HCT116 (cell line): ENCODE measurements at regions of chr1 and their contacts with region 1.

Region 1: DNA sequence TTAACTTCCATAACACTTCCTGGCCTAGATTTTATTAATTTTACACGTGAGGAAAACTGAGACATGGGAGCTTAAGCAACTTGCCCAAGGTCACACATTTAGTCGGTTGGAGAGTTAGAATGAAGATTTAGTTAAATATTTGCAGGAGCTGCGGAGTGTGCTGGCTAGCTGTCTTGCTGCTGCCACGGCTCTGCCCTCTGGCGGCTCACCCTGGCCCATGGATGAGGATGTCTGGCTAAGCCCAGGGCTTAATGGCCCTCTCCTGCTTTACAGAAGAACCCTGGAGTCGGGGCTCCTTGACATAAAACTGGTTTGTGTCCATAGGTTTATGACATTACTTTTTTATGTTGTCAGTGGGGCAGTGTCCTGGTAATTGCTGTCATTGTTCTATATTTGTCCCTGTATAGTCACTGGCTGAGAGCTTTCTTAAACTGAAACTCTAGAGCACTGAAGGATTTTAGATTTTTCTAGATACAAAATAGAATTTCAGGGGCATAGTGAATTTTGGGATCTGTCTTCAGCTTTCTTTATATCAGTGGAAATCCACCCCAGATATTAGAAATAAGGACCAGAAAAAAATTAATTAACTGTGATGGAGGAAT is 88.9 kb upstream of the WLS start:
- DNase-seq: no peak
- ATAC-seq: peak; percentile 69
- H3K4me3 ChIP-seq: no peak overlapping the region
- H3K27ac ChIP-seq: no peak overlapping the region
- H3K4me1 ChIP-seq: peaks cover 40 to 43% of the 10 kb centered on the region in 2 experiments
- H3K27me3 ChIP-seq: no peaks in the 10 kb centered on the region
- CTCF ChIP-seq: peak; percentile 72 to 91 (median 78)
- POLR2A ChIP-seq: no peak
- RAD21 ChIP-seq: peak; percentile 85

Region 2: DNA sequence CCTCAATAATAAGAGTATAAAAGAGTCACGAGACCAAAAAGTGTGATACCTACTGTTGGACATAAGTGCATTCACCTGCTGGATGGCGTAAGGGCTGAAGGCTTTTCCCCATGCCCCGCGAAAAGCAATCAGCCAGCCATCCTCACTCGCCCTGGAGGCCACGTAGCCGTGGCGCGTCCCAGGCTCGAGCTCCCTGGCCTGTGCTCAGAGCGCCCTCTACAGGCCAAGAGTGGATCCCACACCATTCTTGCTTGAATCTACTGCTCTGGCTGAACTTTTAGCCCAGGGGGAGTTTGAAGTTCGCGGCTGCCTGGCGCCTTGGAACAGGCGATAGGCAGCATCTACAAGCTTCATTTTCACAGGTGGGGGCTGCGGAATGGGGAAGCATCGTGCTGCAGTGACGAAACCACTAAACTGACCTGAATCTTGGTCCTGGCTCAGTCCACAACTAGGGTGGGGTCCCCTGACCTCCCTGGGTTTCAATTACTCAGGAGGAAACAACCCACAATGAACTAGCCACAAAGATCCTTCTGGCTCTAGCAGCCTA is 820.7 kb before region 1 on chr1:
- CTCF ChIA-PET with region 1: no interaction called
- POLR2A ChIA-PET with region 1: no interaction called
- RAD21 ChIA-PET with region 1: no interaction called
- intact Hi-C with region 1: no loop called
- DNase-seq: peak; percentile 87
- ATAC-seq: peak; percentile 99
- H3K4me3 ChIP-seq: peak overlapping the region in 1 of 2 experiments; percentile 30; a peak in 1 of 4 replicates
- H3K27ac ChIP-seq: no peak overlapping the region
- H3K4me1 ChIP-seq: peaks cover 0 to 4% of the 10 kb centered on the region in 2 experiments; a peak in 1 of 4 replicates
- H3K27me3 ChIP-seq: no peaks in the 10 kb centered on the region
- CTCF ChIP-seq: peak; percentile 96 to 98 (median 98)
- POLR2A ChIP-seq: no peak
- RAD21 ChIP-seq: peak; percentile 100

Region 3: GRCh38 chr1:68173911-68174737 is 147.1 kb before region 1 on chr1:
- CTCF ChIA-PET with region 1: no interaction called
- POLR2A ChIA-PET with region 1: no interaction called
- RAD21 ChIA-PET with region 1: no interaction called
- intact Hi-C with region 1: loop called (anchors 5 kb)
- DNase-seq: peak; percentile 22
- ATAC-seq: peak; percentile 75
- H3K4me3 ChIP-seq: peak overlapping the region in 1 of 2 experiments; percentile 26; a peak in 2 of 4 replicates
- H3K27ac ChIP-seq: no peak overlapping the region
- H3K4me1 ChIP-seq: peaks cover 52 to 58% of the 10 kb centered on the region in 2 experiments
- H3K27me3 ChIP-seq: no peaks in the 10 kb centered on the region
- CTCF ChIP-seq: no peak
- POLR2A ChIP-seq: no peak
- RAD21 ChIP-seq: no peak